ENCODE measurements at regions of chr2 and their contacts with region 1.

Region 1: GRCh38 chr2:176079831-176080539 is 3.8 kb downstream of the EVX2 start:
- DNase-seq: no peak
- H3K4me3 Mint-ChIP-seq: no peak overlapping the region
- H3K27ac Mint-ChIP-seq: peak overlapping the region; percentile 76
- H3K4me1 Mint-ChIP-seq: peaks cover 5% of the 10 kb centered on the region
- H3K27me3 Mint-ChIP-seq: peaks cover 69% of the 10 kb centered on the region

Region 2: GRCh38 chr2:176110975-176111663 is 31.1 kb after region 1 on chr2:
- intact Hi-C with region 1: loop called (anchors 2 kb)
- DNase-seq: no peak
- H3K4me3 Mint-ChIP-seq: no peak overlapping the region
- H3K27ac Mint-ChIP-seq: no peak overlapping the region
- H3K4me1 Mint-ChIP-seq: peaks cover 6% of the 10 kb centered on the region
- H3K27me3 Mint-ChIP-seq: peaks cover 73% of the 10 kb centered on the region

Region 3: GRCh38 chr2:176161819-176162626 is 82.0 kb after region 1 on chr2:
- intact Hi-C with region 1: loop called (anchors 2 kb)
- DNase-seq: no peak
- H3K4me3 Mint-ChIP-seq: no peak overlapping the region
- H3K27ac Mint-ChIP-seq: no peak overlapping the region
- H3K4me1 Mint-ChIP-seq: no peaks in the 10 kb centered on the region
- H3K27me3 Mint-ChIP-seq: peaks cover 88% of the 10 kb centered on the region